A549 (cell line): ENCODE measurements at regions of chr17 and their contacts with region 1.

Region 1: DNA sequence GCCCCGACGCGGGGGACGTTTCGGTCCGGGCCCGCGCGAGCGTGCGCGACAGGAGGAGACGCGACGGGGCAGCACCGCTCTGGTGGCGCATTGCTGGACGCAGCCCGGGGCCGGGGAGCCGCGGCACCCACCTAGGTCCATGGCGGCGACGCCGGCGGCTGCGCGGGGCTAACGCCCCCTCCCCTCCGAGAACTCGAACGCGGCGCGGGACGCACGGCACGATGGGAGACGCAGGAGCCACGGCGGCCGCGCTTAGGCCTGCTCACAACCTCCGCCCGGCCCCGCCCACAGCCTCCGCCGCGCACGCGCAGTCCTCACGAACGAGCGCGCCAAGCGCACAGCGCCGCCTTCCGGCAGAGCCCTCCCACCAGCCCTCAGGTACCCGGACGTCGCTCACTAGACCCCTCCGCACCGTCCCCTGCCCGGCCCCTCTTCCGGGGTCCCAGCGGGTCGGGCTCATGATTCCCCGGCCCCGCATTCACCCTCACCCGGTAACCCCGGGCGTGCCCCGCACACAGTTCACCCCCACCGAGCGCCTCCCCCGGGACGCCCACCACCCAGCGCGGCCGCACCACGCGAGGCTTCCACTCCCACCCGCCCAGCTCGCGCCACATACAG is at the start of gene GEMIN4:
- DNase-seq: peak; percentile 94 to 95
- ATAC-seq: peak; percentile 79 to 91
- H3K4me3 ChIP-seq: peak within 1 kb of the TSS; percentile 97
- H3K27ac ChIP-seq: peak within 1 kb of the TSS; percentile 97 to 98
- H3K4me1 ChIP-seq: peaks cover 10% of the 10 kb centered on the region
- CTCF ChIP-seq: peak; percentile 97
- EP300 ChIP-seq: no peak
- POLR2A ChIP-seq: peak; percentile 92
- RAD21 ChIP-seq: peak; percentile 32 to 64; a peak in 4 of 5 replicates
- polyA plus RNA-seq, gene GEMIN4: 36.1 and 51.8 TPM in 2 replicates

Region 2: GRCh38 chr17:647324-648197 is 104.5 kb before region 1 on chr17:
- CTCF ChIA-PET with region 1: no interaction called
- POLR2A ChIA-PET with region 1: no interaction called
- DNase-seq: no peak
- ATAC-seq: no peak
- H3K4me3 ChIP-seq: no peak overlapping the region
- H3K27ac ChIP-seq: no peak overlapping the region
- H3K4me1 ChIP-seq: no peaks in the 10 kb centered on the region
- CTCF ChIP-seq: no peak
- EP300 ChIP-seq: no peak
- POLR2A ChIP-seq: no peak
- RAD21 ChIP-seq: no peak

Region 3: DNA sequence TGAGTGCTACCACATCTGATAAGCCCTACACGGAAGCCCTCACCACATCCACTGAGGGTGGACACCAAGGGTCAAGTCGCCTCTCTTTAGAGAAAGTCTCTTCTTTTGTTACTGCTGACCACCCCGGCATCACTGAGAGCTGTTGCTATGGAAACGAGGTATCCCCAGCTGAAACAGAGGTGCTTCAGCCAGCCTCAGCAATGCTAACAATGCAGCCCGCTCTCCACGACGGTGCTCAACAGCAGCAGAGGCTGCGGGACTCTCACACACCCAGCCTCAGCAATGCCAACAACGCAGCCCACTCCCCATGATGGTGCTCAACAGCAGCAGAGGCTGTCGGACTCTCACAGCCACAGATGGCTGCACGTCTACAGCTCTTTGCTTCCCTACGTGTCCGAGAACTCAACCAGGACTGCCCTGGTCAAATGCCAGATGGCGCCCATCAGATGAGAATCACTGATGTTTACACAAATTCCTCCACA is 78.9 kb before region 1 on chr17:
- CTCF ChIA-PET with region 1: no interaction called
- POLR2A ChIA-PET with region 1: no interaction called
- DNase-seq: no peak
- ATAC-seq: no peak
- H3K4me3 ChIP-seq: no peak overlapping the region
- H3K27ac ChIP-seq: no peak overlapping the region
- H3K4me1 ChIP-seq: peaks cover 9% of the 10 kb centered on the region
- CTCF ChIP-seq: no peak
- EP300 ChIP-seq: no peak
- POLR2A ChIP-seq: no peak; the same call in 1 of the 2 replicates
- RAD21 ChIP-seq: no peak

Region 4: GRCh38 chr17:716238-716637 is 35.9 kb before region 1 on chr17:
- CTCF ChIA-PET with region 1: interaction called, 10 read pairs
- POLR2A ChIA-PET with region 1: interaction called, 6 read pairs
- DNase-seq: no peak
- ATAC-seq: no peak
- H3K4me3 ChIP-seq: peak overlapping the region; percentile 70
- H3K27ac ChIP-seq: peak overlapping the region; percentile 79 to 91
- H3K4me1 ChIP-seq: peaks cover 25% of the 10 kb centered on the region
- CTCF ChIP-seq: no peak
- EP300 ChIP-seq: no peak
- POLR2A ChIP-seq: no peak
- RAD21 ChIP-seq: no peak

Region 5: GRCh38 chr17:740240-741017 is 11.7 kb before region 1 on chr17:
- CTCF ChIA-PET with region 1: interaction called, 14 read pairs
- POLR2A ChIA-PET with region 1: interaction called, 3 read pairs
- DNase-seq: no peak
- ATAC-seq: no peak
- H3K4me3 ChIP-seq: no peak overlapping the region
- H3K27ac ChIP-seq: no peak overlapping the region
- H3K4me1 ChIP-seq: no peaks in the 10 kb centered on the region
- CTCF ChIP-seq: no peak
- EP300 ChIP-seq: no peak
- POLR2A ChIP-seq: no peak
- RAD21 ChIP-seq: no peak

Region 6: DNA sequence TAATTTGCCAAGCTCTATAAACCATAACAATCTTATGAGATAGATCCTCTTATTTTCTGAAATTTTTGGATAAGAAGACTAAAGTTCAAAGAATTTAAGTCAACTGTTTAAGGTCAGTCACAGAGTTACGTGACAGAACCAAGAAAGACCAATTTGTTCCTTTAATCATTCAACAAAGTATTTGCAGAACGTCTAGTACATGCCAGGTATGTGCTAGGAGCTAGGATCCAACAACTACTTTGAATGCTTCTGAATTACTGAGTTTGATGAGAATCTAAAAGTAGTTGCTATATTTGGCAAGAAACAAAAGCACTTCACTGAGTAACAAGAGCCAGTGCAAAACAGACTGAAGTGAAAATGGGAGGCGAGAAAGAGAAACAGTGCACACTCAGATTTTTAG is 15.0 kb after region 1 on chr17:
- CTCF ChIA-PET with region 1: interaction called, 36 read pairs
- POLR2A ChIA-PET with region 1: no interaction called
- DNase-seq: no peak
- ATAC-seq: no peak
- H3K4me3 ChIP-seq: no peak overlapping the region
- H3K27ac ChIP-seq: no peak overlapping the region
- H3K4me1 ChIP-seq: no peaks in the 10 kb centered on the region
- CTCF ChIP-seq: no peak
- EP300 ChIP-seq: no peak
- POLR2A ChIP-seq: no peak
- RAD21 ChIP-seq: no peak

Region 7: DNA sequence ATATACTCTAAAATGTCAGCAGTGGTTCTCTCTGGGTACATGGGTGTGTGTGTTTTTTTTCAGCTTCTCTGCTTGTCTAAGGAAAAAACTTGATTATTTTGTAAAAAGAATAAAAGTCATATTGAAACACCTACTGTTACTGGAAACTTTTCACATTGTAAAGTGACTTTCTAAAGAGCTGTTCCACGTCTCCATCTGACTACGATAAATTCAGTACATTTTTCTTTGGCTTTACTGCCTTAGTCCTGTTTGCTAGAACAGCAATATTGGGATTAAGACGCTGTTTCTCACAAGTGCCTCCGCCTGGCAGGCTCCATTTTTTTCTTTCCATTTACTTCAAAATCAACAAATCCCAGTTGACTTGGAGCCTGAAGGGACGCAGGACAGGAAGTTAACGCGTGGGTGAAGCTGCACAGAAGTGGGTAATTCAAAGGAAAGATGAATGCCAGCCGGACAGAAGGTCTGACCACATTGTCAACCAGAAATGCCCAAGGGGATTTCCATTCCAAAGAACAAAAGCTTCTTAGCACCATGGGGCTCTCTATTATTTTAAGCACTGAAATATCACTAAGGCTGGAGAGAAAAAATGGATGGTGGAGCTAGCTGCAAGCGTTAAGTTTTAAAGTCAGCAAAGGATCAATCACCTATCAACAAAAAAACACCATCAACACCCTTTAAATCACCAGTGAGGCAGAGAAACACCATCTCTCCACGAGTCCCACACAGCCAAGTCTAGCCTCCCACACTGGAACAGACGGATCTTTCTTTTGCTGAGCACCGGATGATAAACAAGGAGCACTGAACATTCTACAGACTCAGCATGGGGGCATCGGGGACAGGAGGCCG is 21.6 kb after region 1 on chr17:
- CTCF ChIA-PET with region 1: interaction called, 11 read pairs
- POLR2A ChIA-PET with region 1: no interaction called
- DNase-seq: no peak
- ATAC-seq: no peak
- H3K4me3 ChIP-seq: no peak overlapping the region
- H3K27ac ChIP-seq: no peak overlapping the region
- H3K4me1 ChIP-seq: no peaks in the 10 kb centered on the region
- CTCF ChIP-seq: no peak
- EP300 ChIP-seq: no peak
- POLR2A ChIP-seq: no peak
- RAD21 ChIP-seq: no peak

Region 8: GRCh38 chr17:781805-782731 is 30.0 kb after region 1 on chr17 and contains the starts of genes GLOD4 and MRM3:
- CTCF ChIA-PET with region 1: interaction called, 18 read pairs
- POLR2A ChIA-PET with region 1: interaction called, 6 read pairs
- DNase-seq: peak; percentile 91 to 95
- ATAC-seq: peak; percentile 95 to 96
- H3K4me3 ChIP-seq: peak within 1 kb of the TSS; percentile 96
- H3K27ac ChIP-seq: peak within 1 kb of the TSS; percentile 89 to 91
- H3K4me1 ChIP-seq: peaks cover 22% of the 10 kb centered on the region
- CTCF ChIP-seq: no peak
- EP300 ChIP-seq: no peak
- POLR2A ChIP-seq: peak; percentile 96
- RAD21 ChIP-seq: no peak
- polyA plus RNA-seq, gene GLOD4: 98.3 and 133 TPM in 2 replicates
- polyA plus RNA-seq, gene MRM3: 27.1 and 38.8 TPM in 2 replicates

Region 9: GRCh38 chr17:1031711-1032110 is 279.6 kb after region 1 on chr17:
- CTCF ChIA-PET with region 1: no interaction called
- POLR2A ChIA-PET with region 1: no interaction called
- DNase-seq: no peak
- ATAC-seq: no peak
- H3K4me3 ChIP-seq: no peak overlapping the region
- H3K27ac ChIP-seq: no peak overlapping the region
- H3K4me1 ChIP-seq: no peaks in the 10 kb centered on the region
- CTCF ChIP-seq: no peak
- EP300 ChIP-seq: no peak
- POLR2A ChIP-seq: no peak
- RAD21 ChIP-seq: no peak